Activated CD4-positive, alpha-beta memory T cell treated with anti-CD3 and anti-CD28 coated beads for 36 hours (primary cell): ENCODE measurements at regions of chr20 and their contacts with region 1.

Region 1: DNA sequence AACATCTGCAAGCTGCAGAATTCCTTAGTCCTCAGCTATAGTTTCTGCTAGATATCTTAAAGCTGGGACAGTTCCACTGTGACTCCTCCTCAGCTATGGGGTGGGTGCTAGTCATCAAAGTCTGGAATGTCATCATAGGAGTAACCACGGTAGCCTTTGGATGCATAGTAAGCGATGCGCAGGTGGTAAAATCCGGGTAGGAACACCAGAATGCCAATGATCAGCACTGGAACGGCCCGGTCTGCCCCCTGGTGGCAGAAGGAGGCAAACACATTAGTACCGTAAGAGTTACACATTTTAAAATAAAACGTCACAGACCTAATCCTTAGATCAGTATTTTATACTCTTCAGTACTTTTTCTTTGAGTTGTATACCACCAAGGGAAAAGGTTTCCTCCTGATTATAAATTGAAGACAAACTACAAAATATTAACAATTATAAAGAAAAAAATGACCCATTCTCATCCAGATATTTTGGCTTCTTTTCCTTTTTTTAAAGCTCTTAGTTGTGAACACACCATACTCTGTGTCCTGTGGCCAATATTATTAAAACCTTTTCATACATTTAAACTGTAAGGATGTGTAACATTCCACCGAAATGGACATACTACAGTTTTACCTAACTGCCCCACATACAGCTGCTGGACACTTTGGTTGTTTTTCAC is 18.9 kb downstream of the PCNA start:
- DNase-seq: peak; percentile 82
- H3K4me3 Mint-ChIP-seq: no peak overlapping the region
- H3K27ac Mint-ChIP-seq: peak overlapping the region; percentile 30
- H3K4me1 Mint-ChIP-seq: peaks cover 4% of the 10 kb centered on the region
- H3K27me3 Mint-ChIP-seq: no peaks in the 10 kb centered on the region

Region 2: GRCh38 chr20:4956200-4956810 is 144.5 kb before region 1 on chr20:
- CTCF ChIA-PET with region 1: interaction called, 44 read pairs
- POLR2A ChIA-PET with region 1: no interaction called
- intact Hi-C with region 1: loop called (anchors 2 kb)
- DNase-seq: no peak
- H3K4me3 Mint-ChIP-seq: no peak overlapping the region
- H3K27ac Mint-ChIP-seq: no peak overlapping the region
- H3K4me1 Mint-ChIP-seq: peaks cover 16% of the 10 kb centered on the region
- H3K27me3 Mint-ChIP-seq: no peaks in the 10 kb centered on the region

Region 3: GRCh38 chr20:5046656-5047339 is 54.0 kb before region 1 on chr20:
- CTCF ChIA-PET with region 1: interaction called, 31 read pairs
- POLR2A ChIA-PET with region 1: no interaction called
- intact Hi-C with region 1: no loop called
- DNase-seq: no peak
- H3K4me3 Mint-ChIP-seq: no peak overlapping the region
- H3K27ac Mint-ChIP-seq: no peak overlapping the region
- H3K4me1 Mint-ChIP-seq: no peaks in the 10 kb centered on the region
- H3K27me3 Mint-ChIP-seq: no peaks in the 10 kb centered on the region

Region 4: DNA sequence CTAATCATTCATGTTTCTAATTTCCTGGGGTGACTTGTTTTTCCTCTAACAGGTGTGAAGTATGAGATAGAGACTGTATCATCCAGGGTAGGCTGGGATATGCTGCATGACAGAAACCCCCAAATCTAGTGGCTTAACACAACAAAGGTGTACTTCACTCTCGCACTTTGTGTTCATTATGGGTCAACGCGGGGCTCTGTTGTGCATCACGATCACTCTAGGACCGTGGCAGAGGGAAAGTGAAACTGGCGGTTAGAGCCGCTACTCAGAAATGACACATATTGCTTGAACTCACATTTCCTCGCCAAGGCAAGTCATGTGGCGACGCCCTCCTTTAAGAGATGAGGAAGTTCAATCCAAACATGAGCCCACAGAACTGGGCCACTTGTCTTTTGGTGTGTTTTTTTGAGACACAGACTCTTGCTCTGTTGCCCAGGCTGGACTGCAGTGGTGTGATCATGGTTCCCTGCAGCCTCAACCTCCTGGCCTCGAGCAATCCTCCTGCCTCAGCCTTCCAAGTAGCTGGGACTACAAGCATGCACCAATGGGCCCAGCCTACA is 22.3 kb before region 1 on chr20:
- CTCF ChIA-PET with region 1: interaction called, 28 read pairs
- POLR2A ChIA-PET with region 1: interaction called, 3 read pairs
- intact Hi-C with region 1: loop called (anchors 1 kb)
- DNase-seq: peak; percentile 92
- H3K4me3 Mint-ChIP-seq: peak overlapping the region; percentile 60
- H3K27ac Mint-ChIP-seq: peak overlapping the region; percentile 90
- H3K4me1 Mint-ChIP-seq: peaks cover 37% of the 10 kb centered on the region
- H3K27me3 Mint-ChIP-seq: no peaks in the 10 kb centered on the region